Activated CD4-positive, alpha-beta memory T cell treated with anti-CD3 and anti-CD28 coated beads for 36 hours (primary cell): ENCODE measurements at regions of chrX and their contacts with region 1.

Region 1: GRCh38 chrX:30593435-30594200 is 16.1 kb upstream of the TASL start:
- DNase-seq: peak; percentile 15
- H3K4me3 Mint-ChIP-seq: no peak overlapping the region
- H3K27ac Mint-ChIP-seq: no peak overlapping the region
- H3K4me1 Mint-ChIP-seq: peaks cover 18% of the 10 kb centered on the region
- H3K27me3 Mint-ChIP-seq: no peaks in the 10 kb centered on the region

Region 2: GRCh38 chrX:30570505-30570904 is 23.1 kb before region 1 on chrX:
- CTCF ChIA-PET with region 1: interaction called, 12 read pairs
- POLR2A ChIA-PET with region 1: no interaction called
- intact Hi-C with region 1: loop called (anchors 1 kb)
- DNase-seq: no peak
- H3K4me3 Mint-ChIP-seq: no peak overlapping the region
- H3K27ac Mint-ChIP-seq: no peak overlapping the region
- H3K4me1 Mint-ChIP-seq: peaks cover 16% of the 10 kb centered on the region
- H3K27me3 Mint-ChIP-seq: no peaks in the 10 kb centered on the region

Region 3: GRCh38 chrX:30577362-30577991 is 16.1 kb before region 1 on chrX and contains the start of gene TASL:
- CTCF ChIA-PET with region 1: no interaction called
- POLR2A ChIA-PET with region 1: no interaction called
- intact Hi-C with region 1: loop called (anchors 2 kb)
- DNase-seq: peak; percentile 40
- H3K4me3 Mint-ChIP-seq: peak within 1 kb of the TSS; percentile 81
- H3K27ac Mint-ChIP-seq: peak within 1 kb of the TSS; percentile 88
- H3K4me1 Mint-ChIP-seq: peaks cover 20% of the 10 kb centered on the region
- H3K27me3 Mint-ChIP-seq: no peaks in the 10 kb centered on the region
- total RNA-seq, gene TASL: 1.1 to 1.6 TPM

Region 4: GRCh38 chrX:30635630-30636029 is 42.0 kb after region 1 on chrX:
- CTCF ChIA-PET with region 1: no interaction called
- POLR2A ChIA-PET with region 1: no interaction called
- intact Hi-C with region 1: no loop called
- DNase-seq: no peak
- H3K4me3 Mint-ChIP-seq: no peak overlapping the region
- H3K27ac Mint-ChIP-seq: no peak overlapping the region
- H3K4me1 Mint-ChIP-seq: peaks cover 2% of the 10 kb centered on the region
- H3K27me3 Mint-ChIP-seq: no peaks in the 10 kb centered on the region